AG04449 (cell line): ENCODE measurements at regions of chr20 and their contacts with region 1.

Region 1: DNA sequence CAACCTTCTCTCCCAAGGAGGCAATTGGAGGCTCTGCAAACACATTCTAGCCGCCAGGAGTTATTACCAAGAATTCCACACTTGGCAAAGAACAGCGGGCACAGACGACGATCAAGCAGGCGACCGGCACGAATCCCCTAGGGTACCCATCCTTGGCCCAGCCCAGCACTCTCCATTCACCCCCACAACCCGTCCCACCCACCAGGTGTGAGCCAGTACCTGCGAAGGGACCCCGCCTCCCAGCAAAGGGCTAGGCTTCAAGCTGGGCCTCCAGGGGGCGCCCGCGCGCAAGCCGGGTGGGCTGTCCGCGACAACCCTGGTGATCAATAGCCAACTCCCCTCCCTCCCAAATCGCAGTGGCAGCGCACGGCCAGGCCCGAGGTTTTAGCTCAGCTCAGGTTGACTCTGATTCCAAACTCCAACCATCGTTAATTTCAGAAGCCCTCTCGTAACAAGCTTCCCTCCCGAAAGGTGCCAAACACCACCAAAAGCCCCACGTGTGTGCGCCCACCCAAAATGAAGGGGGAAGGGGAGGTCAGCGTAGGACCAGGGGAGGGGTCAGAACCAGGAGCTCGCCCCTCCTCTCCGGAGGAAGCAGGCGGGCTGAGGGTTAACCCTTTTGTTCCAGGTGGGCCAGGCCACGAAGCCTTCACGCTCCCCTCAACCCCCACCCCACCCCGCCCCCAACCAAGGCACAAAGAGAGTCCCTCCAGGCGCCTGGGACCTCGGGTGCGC is 2.1 kb downstream of the SALL4 start:
- DNase-seq: no peak
- H3K4me3 ChIP-seq: peak overlapping the region; percentile 57
- CTCF ChIP-seq: peak; percentile 96

Region 2: GRCh38 chr20:51220293-51220706 is 579.9 kb before region 1 on chr20:
- CTCF ChIA-PET with region 1: no interaction called
- POLR2A ChIA-PET with region 1: no interaction called
- DNase-seq: no peak
- H3K4me3 ChIP-seq: no peak overlapping the region
- CTCF ChIP-seq: peak; percentile 94

Region 3: GRCh38 chr20:51695574-51696303 is 104.5 kb before region 1 on chr20:
- CTCF ChIA-PET with region 1: interaction called, 10 read pairs
- POLR2A ChIA-PET with region 1: no interaction called
- DNase-seq: peak; percentile 40
- H3K4me3 ChIP-seq: no peak overlapping the region; the same call in none of the 2 replicates
- CTCF ChIP-seq: no peak

Region 4: GRCh38 chr20:51789434-51789833 is 10.8 kb before region 1 on chr20:
- CTCF ChIA-PET with region 1: interaction called, 52 read pairs
- POLR2A ChIA-PET with region 1: no interaction called
- DNase-seq: no peak
- H3K4me3 ChIP-seq: no peak overlapping the region
- CTCF ChIP-seq: no peak

Region 5: GRCh38 chr20:51918561-51918960 is 118.3 kb after region 1 on chr20:
- CTCF ChIA-PET with region 1: no interaction called
- POLR2A ChIA-PET with region 1: no interaction called
- DNase-seq: no peak
- H3K4me3 ChIP-seq: no peak overlapping the region
- CTCF ChIP-seq: no peak

Region 6: DNA sequence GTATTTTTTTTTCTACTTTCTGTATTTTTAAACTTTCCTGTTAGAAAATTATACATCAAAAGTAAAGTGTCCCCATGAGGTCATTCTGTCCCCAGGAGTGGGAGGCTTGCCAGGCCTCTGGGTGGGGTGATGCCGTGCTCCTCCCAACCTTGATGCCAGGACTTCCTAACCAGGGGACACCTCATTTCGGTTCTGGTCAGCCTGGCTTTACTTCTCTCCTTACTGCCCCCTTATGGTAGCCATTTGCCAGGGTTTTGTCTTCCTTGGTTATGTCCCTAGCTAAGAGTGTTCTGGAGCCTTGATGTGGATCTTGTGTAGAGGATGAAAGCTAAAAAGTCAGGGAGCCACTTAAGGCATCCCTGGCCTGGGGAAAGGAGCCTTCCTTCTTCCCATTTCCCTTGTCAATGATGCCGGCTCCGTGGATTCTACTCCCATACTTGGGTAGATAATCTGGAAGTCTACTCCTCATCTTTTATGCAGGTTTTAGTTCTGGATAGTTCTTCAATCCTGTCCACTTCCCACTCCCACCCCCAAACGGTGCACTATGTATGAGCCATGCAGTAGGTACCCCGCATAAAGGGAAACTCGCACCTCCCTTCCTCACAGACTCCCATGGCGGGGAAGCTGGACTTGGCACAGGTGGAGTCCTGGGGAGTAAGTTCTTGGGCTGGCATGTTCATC is 166.2 kb after region 1 on chr20:
- CTCF ChIA-PET with region 1: interaction called, 18 read pairs
- POLR2A ChIA-PET with region 1: no interaction called
- DNase-seq: no peak
- H3K4me3 ChIP-seq: no peak overlapping the region
- CTCF ChIP-seq: peak; percentile 68

Region 7: GRCh38 chr20:52078289-52078688 is 278.1 kb after region 1 on chr20:
- CTCF ChIA-PET with region 1: interaction called, 50 read pairs
- POLR2A ChIA-PET with region 1: no interaction called
- DNase-seq: no peak
- H3K4me3 ChIP-seq: no peak overlapping the region
- CTCF ChIP-seq: no peak